ENCODE measurements at regions of chrX and their contacts with region 1.

Region 1: GRCh38 chrX:129748305-129748704 is 9.5 kb downstream of the XPNPEP2 start:
- DNase-seq: no peak
- ATAC-seq: peak; percentile 80
- H3K4me3 ChIP-seq: no peak overlapping the region
- H3K27ac ChIP-seq: no peak overlapping the region
- H3K4me1 ChIP-seq: peaks cover 0 to 1% of the 10 kb centered on the region in 2 donors
- H3K27me3 ChIP-seq: no peaks in the 10 kb centered on the region

Region 2: GRCh38 chrX:129654419-129655165 is 93.7 kb before region 1 on chrX and contains the start of gene APLN:
- intact Hi-C with region 1: no loop called
- DNase-seq: peak; percentile 77 to 84
- ATAC-seq: peak; percentile 56
- H3K4me3 ChIP-seq: peak within 1 kb of the TSS in 1 of 2 donors; percentile 38
- H3K27ac ChIP-seq: no peak within 1 kb of the TSS
- H3K4me1 ChIP-seq: no peaks in the 10 kb centered on the region
- H3K27me3 ChIP-seq: no peaks in the 10 kb centered on the region
- total RNA-seq, gene APLN: 11.0 to 24.0 TPM

Region 3: DNA sequence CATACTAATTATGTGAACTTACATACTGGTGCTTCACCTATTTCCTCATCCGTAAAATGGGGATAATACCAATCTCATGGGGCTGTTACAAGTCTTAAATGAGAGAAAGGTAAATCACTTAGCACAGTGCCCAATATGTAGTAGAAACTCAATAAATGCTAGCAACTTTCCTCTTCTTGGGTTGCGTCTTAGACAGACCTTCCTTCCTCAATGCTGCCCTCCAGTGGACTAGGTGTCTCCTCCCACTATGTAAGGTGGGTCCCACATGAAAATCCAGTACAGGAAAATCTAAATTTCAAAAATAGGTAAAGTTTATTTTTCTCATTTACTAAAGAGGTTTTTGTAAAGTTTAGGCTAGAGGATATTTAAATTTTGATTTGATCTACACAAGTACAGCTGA is 74.8 kb after region 1 on chrX:
- intact Hi-C with region 1: loop called in 1 of 2 experiments (anchors 10 kb)
- DNase-seq: peak in 1 of 2 donors; percentile 59
- ATAC-seq: peak; percentile 71
- H3K4me3 ChIP-seq: no peak overlapping the region
- H3K27ac ChIP-seq: no peak overlapping the region
- H3K4me1 ChIP-seq: no peaks in the 10 kb centered on the region
- H3K27me3 ChIP-seq: no peaks in the 10 kb centered on the region

Region 4: DNA sequence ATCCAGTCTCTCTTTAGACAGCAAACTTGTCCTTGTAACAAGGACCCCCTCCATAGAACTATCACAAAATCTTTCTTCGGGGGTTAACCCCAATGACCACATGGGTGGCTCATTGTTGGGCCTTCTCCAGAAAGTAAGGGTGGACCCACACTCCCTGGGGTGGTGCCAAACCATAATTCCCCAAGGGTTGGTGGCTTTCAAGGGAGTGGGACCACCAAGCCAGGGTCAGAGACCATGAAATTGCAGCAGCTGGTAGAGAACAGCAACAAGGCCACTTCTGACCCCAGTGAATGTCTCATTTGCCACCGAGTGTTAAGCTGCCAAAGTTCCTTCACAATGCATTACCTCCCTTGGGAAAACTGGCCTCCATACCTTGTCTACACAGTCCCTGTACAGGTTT is 124.2 kb after region 1 on chrX:
- intact Hi-C with region 1: no loop called
- DNase-seq: no peak
- ATAC-seq: no peak
- H3K4me3 ChIP-seq: no peak overlapping the region
- H3K27ac ChIP-seq: no peak overlapping the region
- H3K4me1 ChIP-seq: no peaks in the 10 kb centered on the region
- H3K27me3 ChIP-seq: no peaks in the 10 kb centered on the region